ENCODE measurements at regions of chr17 and their contacts with region 1.

Region 1: DNA sequence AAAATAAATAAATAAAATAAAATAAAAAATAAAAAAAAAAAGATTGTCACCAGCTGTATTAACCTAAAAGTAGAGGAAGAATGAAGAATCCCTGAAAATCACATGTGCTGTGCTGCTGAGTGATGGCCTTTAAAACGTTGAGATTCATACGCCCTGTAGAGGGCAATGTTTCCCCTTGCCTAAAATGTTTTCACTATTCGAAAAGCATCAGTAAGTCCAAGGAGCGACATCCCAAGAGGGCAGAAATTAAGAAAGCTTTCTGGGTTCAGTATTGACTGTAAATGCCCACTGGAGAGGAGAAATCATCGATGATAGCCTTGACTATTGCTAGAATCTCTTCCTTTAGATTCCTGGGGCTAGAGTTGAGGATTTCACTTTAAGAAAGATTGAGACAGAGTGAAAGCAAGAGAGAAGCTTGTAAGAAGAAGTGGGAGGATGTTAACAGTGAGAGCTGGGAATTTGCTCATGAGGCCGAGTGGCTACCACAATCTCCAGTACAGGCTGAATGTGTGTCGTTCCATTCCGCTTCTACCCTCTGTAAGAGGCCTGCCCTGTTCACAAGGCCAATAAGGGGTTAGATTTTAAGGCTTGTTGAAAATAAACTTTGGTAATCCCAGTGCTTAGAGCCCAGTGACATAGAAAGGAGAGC is 170.8 kb upstream of the FAM20A start:
- DNase-seq: peak in 1 of 2 donors; percentile 49
- ATAC-seq: peak in 2 of 3 donors; percentile 50 to 71
- H3K4me3 ChIP-seq: no peak overlapping the region
- H3K4me3 Mint-ChIP-seq: peak overlapping the region; percentile 25
- H3K27ac ChIP-seq: no peak overlapping the region
- H3K27ac Mint-ChIP-seq: peak overlapping the region in 1 of 2 donors; percentile 33
- H3K4me1 ChIP-seq: no peaks in the 10 kb centered on the region
- H3K4me1 Mint-ChIP-seq: peaks cover 0 to 4% of the 10 kb centered on the region in 2 donors
- H3K27me3 ChIP-seq: no peaks in the 10 kb centered on the region
- H3K27me3 Mint-ChIP-seq: no peaks in the 10 kb centered on the region
- CTCF ChIP-seq: no peak

Region 2: GRCh38 chr17:69030145-69030544 is 258.2 kb after region 1 on chr17:
- intact Hi-C with region 1: no loop called
- DNase-seq: no peak
- ATAC-seq: no peak
- H3K4me3 ChIP-seq: no peak overlapping the region
- H3K4me3 Mint-ChIP-seq: no peak overlapping the region
- H3K27ac ChIP-seq: no peak overlapping the region
- H3K27ac Mint-ChIP-seq: no peak overlapping the region
- H3K4me1 ChIP-seq: no peaks in the 10 kb centered on the region
- H3K4me1 Mint-ChIP-seq: no peaks in the 10 kb centered on the region
- H3K27me3 ChIP-seq: no peaks in the 10 kb centered on the region
- H3K27me3 Mint-ChIP-seq: peaks cover 3 to 13% of the 10 kb centered on the region in 2 donors
- CTCF ChIP-seq: no peak

Region 3: GRCh38 chr17:69390795-69391501 is 619.0 kb after region 1 on chr17:
- intact Hi-C with region 1: loop called (anchors 10 kb)
- DNase-seq: no peak
- ATAC-seq: no peak
- H3K4me3 ChIP-seq: no peak overlapping the region
- H3K4me3 Mint-ChIP-seq: no peak overlapping the region
- H3K27ac ChIP-seq: no peak overlapping the region
- H3K27ac Mint-ChIP-seq: no peak overlapping the region
- H3K4me1 ChIP-seq: no peaks in the 10 kb centered on the region
- H3K4me1 Mint-ChIP-seq: no peaks in the 10 kb centered on the region
- H3K27me3 ChIP-seq: peaks cover 3% of the 10 kb centered on the region
- H3K27me3 Mint-ChIP-seq: peaks cover 18 to 29% of the 10 kb centered on the region in 2 donors
- CTCF ChIP-seq: no peak

Measured in natural killer cell (primary cell).